ENCODE measurements at regions of chr7 and their contacts with region 1.

Region 1: DNA sequence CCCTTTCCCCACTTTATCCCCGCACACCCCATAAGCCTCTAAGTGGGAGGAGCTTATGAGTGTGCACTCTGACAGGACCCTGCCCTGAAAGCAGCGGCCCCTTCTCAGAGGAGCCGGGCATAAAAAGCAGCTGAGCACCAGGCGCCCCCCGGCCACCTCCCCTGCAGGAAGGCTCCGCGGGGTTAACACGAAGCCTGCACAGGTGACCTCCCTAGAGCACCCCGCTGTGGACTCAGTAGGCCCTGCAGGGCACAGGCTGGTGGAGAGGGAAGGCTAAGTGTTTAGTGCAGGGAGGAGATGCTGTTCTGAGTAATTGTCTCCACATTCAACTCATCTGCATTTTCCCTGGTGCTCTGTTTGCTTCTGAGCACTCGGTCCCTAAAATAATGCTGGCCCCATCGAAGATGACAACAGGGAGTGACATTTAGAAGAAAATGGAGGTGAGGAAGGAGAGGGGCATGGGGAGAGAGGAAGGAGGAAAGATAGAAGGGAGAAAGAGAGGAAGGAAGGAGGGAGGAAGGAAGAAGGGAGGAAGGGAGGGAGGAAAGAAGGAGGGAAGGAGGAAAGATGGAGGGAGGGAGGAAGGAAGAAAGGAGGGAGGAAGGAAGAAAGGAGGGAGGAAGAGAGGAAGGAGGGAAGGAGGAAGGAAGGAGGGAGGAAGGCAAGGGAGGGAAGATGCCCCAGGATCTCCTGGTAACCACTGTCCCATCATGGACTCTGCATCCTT is 25.4 kb upstream of the CNPY1 start:
- DNase-seq: no peak
- ATAC-seq: no peak
- H3K4me3 ChIP-seq: no peak overlapping the region
- H3K27ac ChIP-seq: no peak overlapping the region
- H3K4me1 ChIP-seq: no peaks in the 10 kb centered on the region
- H3K27me3 ChIP-seq: no peaks in the 10 kb centered on the region
- CTCF ChIP-seq: no peak

Region 2: DNA sequence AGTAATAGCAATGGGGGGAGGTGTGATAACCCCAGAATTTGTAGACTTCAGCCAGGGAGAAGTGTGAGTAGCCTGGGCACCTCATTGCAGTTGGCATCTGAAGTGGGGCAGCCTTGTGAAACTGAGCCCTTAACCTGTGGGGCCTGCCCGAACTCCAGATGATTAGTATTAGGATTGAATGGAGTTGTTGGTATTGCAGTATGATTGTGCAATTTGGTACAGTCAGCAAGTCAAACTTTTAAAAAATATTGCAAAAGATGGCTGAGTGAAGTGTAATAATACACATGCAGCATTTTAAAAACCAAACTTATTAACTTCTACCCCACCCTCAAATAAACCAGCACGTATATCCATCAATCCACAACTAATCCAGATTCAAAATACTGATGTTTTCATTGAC is 82.1 kb after region 1 on chr7:
- CTCF ChIA-PET with region 1: no interaction called
- POLR2A ChIA-PET with region 1: no interaction called
- in situ Hi-C with region 1: no loop called
- intact Hi-C with region 1: no loop called
- DNase-seq: no peak
- ATAC-seq: no peak
- H3K4me3 ChIP-seq: no peak overlapping the region
- H3K27ac ChIP-seq: no peak overlapping the region
- H3K4me1 ChIP-seq: peaks cover 9% of the 10 kb centered on the region
- H3K27me3 ChIP-seq: no peaks in the 10 kb centered on the region
- CTCF ChIP-seq: no peak

Region 3: GRCh38 chr7:156318426-156318825 is 746.7 kb after region 1 on chr7:
- CTCF ChIA-PET with region 1: no interaction called
- POLR2A ChIA-PET with region 1: interaction called, 15 read pairs
- in situ Hi-C with region 1: no loop called
- intact Hi-C with region 1: no loop called
- DNase-seq: no peak
- ATAC-seq: no peak
- H3K4me3 ChIP-seq: no peak overlapping the region
- H3K27ac ChIP-seq: no peak overlapping the region
- H3K4me1 ChIP-seq: no peaks in the 10 kb centered on the region
- H3K27me3 ChIP-seq: peaks cover 3% of the 10 kb centered on the region
- CTCF ChIP-seq: no peak

Measured in Panc1 (cell line).